Activated CD4-positive, alpha-beta T cell treated with anti-CD3 and anti-CD28 coated beads, Interleukin-2, amount 10 ng/mL, durations not matched to agents 7 days and 5 days (primary cell): ENCODE measurements at regions of chr15 and their contacts with region 1.

Region 1: DNA sequence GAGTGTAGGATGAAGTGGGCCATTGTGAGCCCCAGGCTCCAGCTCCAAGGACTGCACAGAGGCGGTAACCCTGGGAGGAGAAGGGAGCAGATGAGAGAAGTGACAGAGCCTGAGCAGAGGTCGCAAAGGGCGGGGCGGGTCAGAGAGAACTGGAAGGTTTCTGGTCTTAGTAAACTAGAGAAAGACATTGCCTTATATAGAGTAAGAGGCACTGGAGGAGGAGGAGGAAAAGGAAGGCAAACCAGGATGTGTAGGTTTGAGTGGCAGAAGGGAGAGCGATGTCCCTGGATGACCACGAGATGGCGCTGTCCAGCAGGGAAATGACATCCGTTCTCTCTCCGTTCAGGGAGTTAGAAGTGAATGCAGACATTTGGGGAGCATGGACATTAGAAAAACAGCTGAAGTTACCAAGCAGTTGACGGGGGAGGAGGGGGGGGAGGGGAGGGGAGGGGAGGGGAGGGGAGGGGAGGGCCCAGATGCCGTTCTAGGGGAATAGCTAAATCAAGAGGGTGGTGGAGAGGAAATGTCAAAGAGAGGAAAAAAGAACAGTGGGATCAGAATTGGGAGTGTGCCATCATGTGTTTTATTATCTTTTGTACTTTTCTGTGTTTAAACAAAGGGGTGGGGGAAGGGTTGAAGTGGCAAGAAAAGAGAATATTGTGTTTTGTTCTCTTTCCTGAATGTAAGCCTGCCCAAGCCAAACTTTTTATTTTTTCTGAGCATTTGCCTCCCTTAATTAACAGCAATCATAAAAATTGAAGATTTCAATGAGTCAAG is 48.8 kb downstream of the STARD5 start:
- DNase-seq: peak; percentile 89
- H3K4me3 Mint-ChIP-seq: no peak overlapping the region
- H3K27ac Mint-ChIP-seq: peak overlapping the region; percentile 75
- H3K4me1 Mint-ChIP-seq: peaks cover 24% of the 10 kb centered on the region
- H3K27me3 Mint-ChIP-seq: no peaks in the 10 kb centered on the region

Region 2: DNA sequence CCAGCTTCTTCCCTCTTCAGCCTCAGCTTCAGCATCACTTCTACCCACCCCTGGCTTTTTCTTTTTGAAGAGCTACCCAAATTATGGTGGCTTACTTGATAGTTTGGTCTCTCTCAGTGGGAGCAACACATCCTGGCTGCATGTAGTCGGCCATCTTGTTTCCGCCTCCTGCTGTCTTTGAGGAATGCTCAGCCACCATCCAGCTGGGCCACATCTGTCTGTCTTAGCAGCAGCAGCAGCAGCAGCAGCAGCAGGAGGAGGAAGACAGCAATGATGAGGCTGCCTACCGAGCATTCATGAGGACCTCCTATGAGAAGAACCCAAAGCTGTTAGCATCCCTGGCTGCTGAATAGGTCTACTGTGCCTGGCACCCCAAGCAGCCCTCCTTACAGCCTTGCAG is 58.7 kb before region 1 on chr15:
- CTCF ChIA-PET with region 1: no interaction called
- POLR2A ChIA-PET with region 1: no interaction called
- DNase-seq: no peak
- H3K4me3 Mint-ChIP-seq: no peak overlapping the region
- H3K27ac Mint-ChIP-seq: no peak overlapping the region
- H3K4me1 Mint-ChIP-seq: no peaks in the 10 kb centered on the region
- H3K27me3 Mint-ChIP-seq: peaks cover 15% of the 10 kb centered on the region

Region 3: DNA sequence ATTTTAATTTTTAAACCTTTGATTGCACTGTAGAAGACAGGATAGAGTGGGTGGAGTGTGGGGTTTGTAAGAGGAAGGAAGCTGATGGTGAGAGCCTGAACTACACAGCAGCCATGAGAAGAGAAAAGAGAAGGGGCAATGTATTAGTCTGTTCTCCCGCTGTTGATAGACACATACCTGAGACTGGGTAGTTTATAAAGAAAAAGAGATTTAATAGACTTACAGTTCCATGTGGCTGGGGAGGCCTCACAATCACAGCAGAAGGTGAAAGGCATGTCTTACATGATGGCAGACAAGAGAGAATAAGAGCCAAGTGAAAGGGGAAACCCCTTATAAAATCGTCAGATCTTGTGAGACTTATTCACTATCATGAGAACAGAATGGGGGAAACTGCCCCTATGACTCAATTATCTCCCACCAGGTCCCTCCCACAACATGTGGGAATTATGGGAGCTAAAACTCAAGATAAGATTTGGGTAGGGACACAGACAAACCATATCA is 11.6 kb after region 1 on chr15:
- CTCF ChIA-PET with region 1: interaction called, 16 read pairs
- POLR2A ChIA-PET with region 1: no interaction called
- DNase-seq: no peak
- H3K4me3 Mint-ChIP-seq: peak overlapping the region; percentile 25
- H3K27ac Mint-ChIP-seq: peak overlapping the region; percentile 87
- H3K4me1 Mint-ChIP-seq: peaks cover 66% of the 10 kb centered on the region
- H3K27me3 Mint-ChIP-seq: no peaks in the 10 kb centered on the region

Region 4: GRCh38 chr15:81293728-81294515 is 18.8 kb after region 1 on chr15:
- CTCF ChIA-PET with region 1: interaction called, 12 read pairs
- POLR2A ChIA-PET with region 1: no interaction called
- DNase-seq: peak; percentile 85
- H3K4me3 Mint-ChIP-seq: peak overlapping the region; percentile 98
- H3K27ac Mint-ChIP-seq: peak overlapping the region; percentile 97
- H3K4me1 Mint-ChIP-seq: peaks cover 68% of the 10 kb centered on the region
- H3K27me3 Mint-ChIP-seq: no peaks in the 10 kb centered on the region

Region 5: DNA sequence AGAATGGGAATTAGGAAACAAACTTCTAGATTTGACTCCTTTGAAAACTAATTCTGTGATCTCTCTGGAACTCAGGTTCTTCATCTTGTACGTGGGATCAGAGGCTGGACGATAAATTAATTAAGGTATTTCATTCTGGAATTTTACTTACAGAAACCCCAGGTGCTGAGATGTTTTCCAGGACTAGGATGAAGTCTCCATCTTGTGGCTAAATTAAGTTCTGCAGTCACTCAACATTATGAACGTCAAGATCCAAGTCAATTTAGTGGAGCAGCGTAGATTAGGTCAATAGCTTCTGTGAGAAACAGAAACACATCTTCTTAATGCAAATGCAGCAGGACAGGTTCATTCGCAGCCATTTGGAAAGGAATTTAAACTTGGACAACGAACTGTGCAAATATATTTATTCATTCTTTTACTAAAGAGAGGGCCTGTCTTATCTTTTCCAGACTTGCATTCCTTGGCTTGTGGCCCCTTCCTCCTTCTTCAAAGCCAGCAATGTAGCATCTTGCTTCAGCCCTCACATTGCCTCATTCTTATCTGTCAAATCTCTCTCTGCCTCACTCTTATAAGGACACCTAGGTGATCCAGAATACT is 125.6 kb after region 1 on chr15:
- CTCF ChIA-PET with region 1: interaction called, 15 read pairs
- POLR2A ChIA-PET with region 1: no interaction called
- DNase-seq: peak; percentile 31
- H3K4me3 Mint-ChIP-seq: no peak overlapping the region
- H3K27ac Mint-ChIP-seq: no peak overlapping the region
- H3K4me1 Mint-ChIP-seq: no peaks in the 10 kb centered on the region
- H3K27me3 Mint-ChIP-seq: peaks cover 3% of the 10 kb centered on the region